Panc1 (cell line): ENCODE measurements at regions of chr17 and their contacts with region 1.

Region 1: GRCh38 chr17:21019976-21020586 is 22.7 kb downstream of the USP22 start:
- DNase-seq: no peak
- ATAC-seq: no peak
- H3K4me3 ChIP-seq: no peak overlapping the region
- H3K27ac ChIP-seq: no peak overlapping the region
- H3K4me1 ChIP-seq: 0 out of 2 replicates have a peak, but pooled peaks cover under 1% of the 10 kb centered on the region
- H3K27me3 ChIP-seq: no peaks in the 10 kb centered on the region
- CTCF ChIP-seq: no peak

Region 2: GRCh38 chr17:20992987-20993862 is 26.9 kb before region 1 on chr17:
- CTCF ChIA-PET with region 1: interaction called, 10 read pairs
- POLR2A ChIA-PET with region 1: no interaction called
- in situ Hi-C with region 1: no loop called
- intact Hi-C with region 1: no loop called
- DNase-seq: peak; percentile 35
- ATAC-seq: no peak
- H3K4me3 ChIP-seq: no peak overlapping the region
- H3K27ac ChIP-seq: no peak overlapping the region
- H3K4me1 ChIP-seq: no peaks in the 10 kb centered on the region
- H3K27me3 ChIP-seq: no peaks in the 10 kb centered on the region
- CTCF ChIP-seq: peak; percentile 93

Region 3: DNA sequence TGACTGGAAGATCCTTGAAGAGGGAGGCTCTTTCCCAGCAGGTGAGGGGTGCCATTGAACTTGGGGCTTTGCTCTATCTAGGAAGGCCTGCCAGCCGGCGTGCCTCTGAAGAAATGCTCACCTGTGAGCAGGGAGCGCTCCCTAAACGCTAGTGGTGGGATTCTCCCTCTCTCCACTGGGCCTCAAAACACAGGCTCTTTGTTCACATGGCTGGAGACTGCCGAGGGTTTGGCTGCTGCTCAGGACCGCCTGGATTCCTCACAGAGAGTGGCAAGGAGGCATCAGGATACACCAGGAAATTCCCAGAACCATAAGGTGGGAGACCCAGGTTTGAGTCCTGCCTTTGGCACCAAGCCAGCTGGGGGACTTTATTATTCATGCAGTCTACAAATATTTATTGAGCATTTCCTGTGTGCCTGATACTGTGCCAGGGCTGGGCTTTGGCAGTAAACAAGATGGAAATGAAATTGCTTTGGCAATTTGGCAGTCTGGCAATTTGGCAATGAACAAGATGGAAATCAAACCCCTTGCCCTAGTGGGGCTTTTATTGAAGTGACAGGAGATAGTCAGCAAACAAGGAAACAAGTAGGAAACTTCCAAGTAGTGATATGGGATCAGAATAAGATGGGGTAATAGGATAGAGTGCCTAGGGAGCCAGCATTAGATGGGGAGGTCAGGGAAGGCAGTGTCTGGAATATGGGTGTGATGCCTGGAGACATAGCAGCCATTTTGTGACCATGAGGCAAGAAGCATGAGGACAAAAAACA is 211.6 kb after region 1 on chr17:
- CTCF ChIA-PET with region 1: interaction called, 12 read pairs
- POLR2A ChIA-PET with region 1: no interaction called
- in situ Hi-C with region 1: no loop called
- intact Hi-C with region 1: no loop called
- DNase-seq: no peak
- ATAC-seq: no peak
- H3K4me3 ChIP-seq: no peak overlapping the region
- H3K27ac ChIP-seq: no peak overlapping the region
- H3K4me1 ChIP-seq: no peaks in the 10 kb centered on the region
- H3K27me3 ChIP-seq: no peaks in the 10 kb centered on the region
- CTCF ChIP-seq: no peak